ENCODE measurements at regions of chr2 and their contacts with region 1.

Region 1: DNA sequence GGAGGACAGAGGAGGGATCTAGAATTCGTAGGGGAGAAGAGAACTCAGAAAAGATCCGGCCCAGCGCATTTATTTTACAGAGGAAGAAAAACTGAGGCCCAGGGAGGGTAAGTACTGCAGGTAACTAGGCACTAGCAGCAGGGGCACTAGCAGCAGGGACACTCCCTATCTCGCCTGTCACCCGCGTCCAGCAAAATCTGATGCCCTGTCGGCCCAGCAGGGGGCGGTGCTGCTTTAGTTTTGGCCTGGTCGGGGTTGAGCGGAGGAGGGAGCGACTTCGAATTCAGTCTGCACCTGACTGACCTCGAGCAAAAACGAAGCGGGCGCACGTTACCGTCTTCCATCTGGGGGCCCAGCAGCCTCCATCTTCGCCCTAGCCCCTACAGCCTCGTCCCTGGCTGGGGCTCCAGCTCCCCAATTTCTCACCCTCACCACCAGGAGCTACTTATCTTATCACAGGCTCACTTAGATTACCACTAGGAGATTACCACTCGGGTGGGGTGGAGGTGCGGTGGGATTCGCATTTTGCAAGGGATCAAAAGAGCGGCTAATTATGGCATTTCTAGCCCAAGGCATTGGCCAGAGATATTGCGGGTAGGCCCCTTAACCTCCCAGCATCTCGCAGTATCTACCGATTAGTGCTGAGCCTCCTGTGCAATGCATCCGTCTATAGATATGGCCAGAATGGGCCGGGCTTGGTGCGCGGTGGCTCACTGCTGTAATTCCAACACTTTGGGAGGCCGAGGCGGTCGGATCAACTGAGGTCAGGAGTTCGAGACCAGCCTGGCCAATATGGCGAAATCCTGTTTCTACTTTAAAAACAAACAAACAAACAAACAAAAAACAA is 17.8 kb upstream of the CD8A start:
- DNase-seq: peak; percentile 6
- H3K4me3 ChIP-seq: peak overlapping the region; percentile 25
- H3K27me3 ChIP-seq: peaks cover 15% of the 10 kb centered on the region
- CTCF ChIP-seq: peak; percentile 85

Region 2: DNA sequence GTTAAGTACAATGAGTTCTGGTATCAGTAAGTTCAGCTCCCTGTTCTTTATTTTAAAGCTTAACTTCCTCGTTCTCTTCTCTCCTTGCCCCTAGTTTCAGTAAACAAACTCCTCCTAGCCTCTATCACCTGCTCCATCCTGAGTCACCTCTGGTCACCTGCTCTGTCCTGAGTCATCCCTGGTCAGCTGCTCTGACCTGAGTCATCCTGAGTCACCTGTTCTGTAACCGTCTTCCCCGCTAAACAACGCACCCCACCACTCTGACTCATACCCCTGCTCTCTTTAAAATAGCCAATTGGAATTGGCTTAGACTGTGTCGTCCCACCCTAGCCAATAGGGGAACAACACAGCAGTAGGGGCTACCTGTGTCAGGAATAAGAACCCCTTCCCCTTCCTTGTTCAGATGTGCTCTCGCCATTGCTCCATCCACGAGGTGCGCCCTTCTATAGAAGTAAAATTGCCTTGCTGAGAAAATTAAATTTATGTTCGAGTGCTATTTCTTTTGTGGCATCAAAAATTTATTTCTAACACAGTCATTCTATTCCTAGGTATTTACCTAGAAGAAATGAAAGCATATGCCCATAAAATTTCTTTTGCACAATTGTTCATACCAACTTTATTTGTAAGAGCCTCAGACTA is 113.4 kb before region 1 on chr2:
- CTCF ChIA-PET with region 1: no interaction called
- POLR2A ChIA-PET with region 1: no interaction called
- DNase-seq: no peak
- H3K4me3 ChIP-seq: no peak overlapping the region
- H3K27me3 ChIP-seq: no peaks in the 10 kb centered on the region
- CTCF ChIP-seq: no peak

Region 3: GRCh38 chr2:86750240-86750839 is 58.2 kb before region 1 on chr2:
- CTCF ChIA-PET with region 1: no interaction called
- POLR2A ChIA-PET with region 1: no interaction called
- DNase-seq: no peak
- H3K4me3 ChIP-seq: no peak overlapping the region
- H3K27me3 ChIP-seq: no peaks in the 10 kb centered on the region
- CTCF ChIP-seq: no peak

Region 4: DNA sequence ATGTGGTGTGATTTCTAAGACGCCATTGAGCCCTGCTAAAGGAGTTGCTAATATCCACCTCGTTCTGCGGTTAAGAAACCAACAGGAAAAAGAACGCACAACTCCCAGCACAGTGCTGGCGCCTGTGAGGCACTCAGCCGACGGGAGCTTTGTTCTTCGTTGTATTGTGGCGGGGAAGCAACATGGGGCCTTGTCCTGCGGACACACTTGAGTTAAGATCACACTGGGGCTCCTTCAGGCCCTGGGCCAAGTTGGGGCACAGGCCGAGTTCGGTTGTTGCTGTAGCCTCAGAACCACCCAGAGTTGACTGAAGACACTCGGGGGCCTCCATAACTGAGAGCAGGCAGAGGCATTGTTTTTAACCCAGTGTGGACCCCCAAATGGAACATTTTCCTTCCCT is 12.8 kb after region 1 on chr2:
- CTCF ChIA-PET with region 1: interaction called, 11 read pairs
- POLR2A ChIA-PET with region 1: no interaction called
- DNase-seq: no peak
- H3K4me3 ChIP-seq: no peak overlapping the region
- H3K27me3 ChIP-seq: peaks cover 3% of the 10 kb centered on the region
- CTCF ChIP-seq: no peak